Caco-2 (cell line): ENCODE measurements at regions of chr16 and their contacts with region 1.

Region 1: DNA sequence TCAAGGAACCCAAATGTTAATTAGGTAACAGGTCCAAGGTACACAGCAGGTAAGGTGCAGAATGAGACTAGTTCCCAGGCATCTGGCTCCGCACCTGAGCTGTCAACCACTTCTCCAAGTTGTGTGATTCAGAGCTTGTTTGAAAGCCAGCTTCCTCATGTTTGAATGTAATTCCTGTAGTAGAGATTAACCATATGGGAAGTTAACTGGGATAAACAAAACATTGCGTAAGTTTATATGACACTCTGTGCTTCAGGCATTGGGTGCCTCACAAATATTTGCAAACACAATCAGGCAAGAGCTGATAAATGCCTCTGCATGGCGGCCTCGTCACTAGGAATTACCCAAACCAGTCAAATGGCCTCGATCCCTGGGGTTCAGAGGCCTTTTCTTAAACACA is 27.9 kb upstream of the CPHXL start:
- DNase-seq: peak; percentile 63 to 69
- H3K4me3 ChIP-seq: no peak overlapping the region
- H3K4me3 Mint-ChIP-seq: no peak overlapping the region
- H3K27ac Mint-ChIP-seq: no peak overlapping the region
- H3K4me1 ChIP-seq: peaks cover 20% of the 10 kb centered on the region
- H3K4me1 Mint-ChIP-seq: peaks cover 8% of the 10 kb centered on the region
- H3K27me3 ChIP-seq: no peaks in the 10 kb centered on the region
- H3K27me3 Mint-ChIP-seq: peaks cover 4% of the 10 kb centered on the region
- CTCF ChIP-seq: no peak

Region 2: DNA sequence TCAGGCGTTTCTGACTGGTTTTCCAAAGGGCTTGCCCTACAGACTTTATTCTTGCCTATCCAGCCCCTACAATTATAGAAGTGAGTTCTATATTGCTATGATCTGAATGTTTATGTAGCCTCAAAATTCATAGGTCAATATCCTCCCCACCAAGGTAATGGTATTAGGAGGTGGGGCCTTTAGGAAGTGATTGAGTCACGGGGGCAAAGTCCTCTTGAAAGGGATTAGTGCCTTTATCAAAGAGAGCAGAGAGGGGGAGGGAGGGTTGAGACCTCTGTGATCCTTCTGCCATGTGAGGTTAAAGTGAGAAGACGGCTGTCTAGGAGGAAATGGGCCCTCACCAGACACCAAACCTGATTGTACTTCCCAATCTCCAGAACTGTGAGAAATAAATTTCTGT is 26.9 kb before region 1 on chr16:
- CTCF ChIA-PET with region 1: no interaction called
- POLR2A ChIA-PET with region 1: no interaction called
- intact Hi-C with region 1: loop called (anchors 1 kb)
- DNase-seq: peak; percentile 70 to 79
- H3K4me3 ChIP-seq: no peak overlapping the region
- H3K4me3 Mint-ChIP-seq: no peak overlapping the region
- H3K27ac Mint-ChIP-seq: no peak overlapping the region
- H3K4me1 ChIP-seq: peaks cover 19% of the 10 kb centered on the region
- H3K4me1 Mint-ChIP-seq: peaks cover 13% of the 10 kb centered on the region
- H3K27me3 ChIP-seq: no peaks in the 10 kb centered on the region
- H3K27me3 Mint-ChIP-seq: no peaks in the 10 kb centered on the region
- CTCF ChIP-seq: no peak